HepG2 (cell line): ENCODE measurements at regions of chr6 and their contacts with region 1.

Region 1: DNA sequence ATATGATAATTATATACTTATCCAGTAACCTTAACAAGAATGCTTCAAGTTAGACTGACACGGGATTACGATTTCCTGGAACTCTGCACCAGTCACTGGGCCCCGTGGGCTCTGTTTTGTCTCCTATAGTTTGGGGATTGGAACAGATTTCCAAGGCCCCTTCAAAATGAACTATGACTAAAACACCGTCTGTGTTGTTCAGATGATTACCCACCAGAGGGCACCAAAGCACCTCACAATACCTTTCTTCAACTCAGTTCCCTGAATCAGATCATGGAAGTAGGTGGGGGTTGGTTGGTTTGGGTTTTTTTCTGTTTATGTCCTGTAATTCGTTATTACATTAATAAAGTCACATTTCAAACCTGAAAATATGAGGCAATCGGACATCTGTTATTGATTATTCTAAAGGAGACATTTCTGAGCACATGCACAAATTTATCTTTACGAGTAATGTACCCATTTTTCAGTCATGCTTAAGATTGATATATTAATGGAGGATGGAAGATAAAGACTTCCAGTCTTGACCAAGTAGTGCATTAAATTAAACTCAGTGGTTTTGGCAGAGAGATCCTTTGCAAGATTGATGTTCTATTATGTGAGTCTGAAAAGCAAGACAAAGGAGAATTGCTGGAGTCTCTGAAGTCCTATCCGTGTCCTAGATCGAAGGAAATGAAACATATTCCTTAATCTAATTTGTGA is 112.0 kb upstream of the COL21A1 start:
- DNase-seq: peak; percentile 74
- ATAC-seq: peak; percentile 93
- H3K4me3 ChIP-seq: no peak overlapping the region
- H3K27ac ChIP-seq: no peak overlapping the region
- H3K4me1 ChIP-seq: peaks cover 15% of the 10 kb centered on the region
- H3K27me3 ChIP-seq: peaks cover 0 to 4% of the 10 kb centered on the region in 2 experiments; a peak in 1 of 5 replicates
- CTCF ChIP-seq: peak; percentile 91
- EP300 ChIP-seq: no peak
- POLR2A ChIP-seq: no peak
- RAD21 ChIP-seq: peak; percentile 92

Region 2: GRCh38 chr6:56314683-56315523 is 44.4 kb before region 1 on chr6:
- CTCF ChIA-PET with region 1: no interaction called
- POLR2A ChIA-PET with region 1: no interaction called
- in situ Hi-C with region 1: no loop called
- intact Hi-C with region 1: loop called (anchors 1 kb)
- DNase-seq: peak; percentile 47
- ATAC-seq: peak; percentile 86
- H3K4me3 ChIP-seq: no peak overlapping the region
- H3K27ac ChIP-seq: no peak overlapping the region
- H3K4me1 ChIP-seq: no peaks in the 10 kb centered on the region
- H3K27me3 ChIP-seq: peaks cover 0 to 8% of the 10 kb centered on the region in 2 experiments; a peak in 1 of 5 replicates
- CTCF ChIP-seq: peak; percentile 80
- EP300 ChIP-seq: no peak
- POLR2A ChIP-seq: no peak
- RAD21 ChIP-seq: peak; percentile 64

Region 3: GRCh38 chr6:56549014-56549413 is 189.7 kb after region 1 on chr6:
- CTCF ChIA-PET with region 1: interaction called, 10 read pairs
- POLR2A ChIA-PET with region 1: no interaction called
- in situ Hi-C with region 1: no loop called
- intact Hi-C with region 1: loop called (anchors 1 kb)
- DNase-seq: no peak
- ATAC-seq: peak; percentile 58; the same call in 2 of the 3 replicates
- H3K4me3 ChIP-seq: no peak overlapping the region
- H3K27ac ChIP-seq: no peak overlapping the region
- H3K4me1 ChIP-seq: peaks cover 17% of the 10 kb centered on the region
- H3K27me3 ChIP-seq: no peaks in the 10 kb centered on the region
- CTCF ChIP-seq: peak; percentile 47
- EP300 ChIP-seq: no peak
- POLR2A ChIP-seq: no peak
- RAD21 ChIP-seq: no peak

Region 4: DNA sequence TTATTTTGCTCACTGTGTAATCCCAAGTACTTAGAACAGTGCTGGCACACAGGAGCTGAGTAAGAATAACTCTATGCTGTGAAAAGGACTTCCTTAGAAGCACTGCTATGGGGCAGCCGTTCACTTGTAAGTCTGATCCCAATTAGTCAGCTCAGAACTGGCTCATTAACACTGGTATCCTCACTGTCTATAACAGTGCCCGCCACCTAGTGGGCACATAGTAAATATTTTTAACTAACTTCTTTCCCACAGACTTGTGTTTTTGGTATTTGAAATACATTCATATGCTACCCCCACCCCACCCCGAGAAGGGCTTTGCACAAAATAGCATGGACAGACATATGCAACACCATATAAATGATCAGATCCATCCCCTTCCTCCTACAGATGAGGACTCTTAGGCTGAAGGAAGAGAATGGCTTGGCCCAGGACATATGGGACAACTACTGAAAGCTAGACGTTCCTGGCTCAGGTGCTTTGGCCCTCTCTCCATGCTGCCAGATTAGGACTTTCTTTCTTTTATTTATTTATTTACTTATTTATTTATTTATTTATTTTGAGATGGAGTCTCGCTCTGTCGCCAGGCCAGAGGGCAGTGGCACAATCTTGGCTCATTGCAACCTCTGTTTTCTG is 236.3 kb after region 1 on chr6:
- CTCF ChIA-PET with region 1: interaction called, 89 read pairs
- POLR2A ChIA-PET with region 1: no interaction called
- in situ Hi-C with region 1: loop called (anchors 5 kb)
- intact Hi-C with region 1: loop called (anchors 1 kb)
- DNase-seq: peak; percentile 43
- ATAC-seq: peak; percentile 89
- H3K4me3 ChIP-seq: no peak overlapping the region
- H3K27ac ChIP-seq: no peak overlapping the region
- H3K4me1 ChIP-seq: no peaks in the 10 kb centered on the region
- H3K27me3 ChIP-seq: no peaks in the 10 kb centered on the region
- CTCF ChIP-seq: peak; percentile 74
- EP300 ChIP-seq: no peak
- POLR2A ChIP-seq: no peak
- RAD21 ChIP-seq: no peak

Region 5: DNA sequence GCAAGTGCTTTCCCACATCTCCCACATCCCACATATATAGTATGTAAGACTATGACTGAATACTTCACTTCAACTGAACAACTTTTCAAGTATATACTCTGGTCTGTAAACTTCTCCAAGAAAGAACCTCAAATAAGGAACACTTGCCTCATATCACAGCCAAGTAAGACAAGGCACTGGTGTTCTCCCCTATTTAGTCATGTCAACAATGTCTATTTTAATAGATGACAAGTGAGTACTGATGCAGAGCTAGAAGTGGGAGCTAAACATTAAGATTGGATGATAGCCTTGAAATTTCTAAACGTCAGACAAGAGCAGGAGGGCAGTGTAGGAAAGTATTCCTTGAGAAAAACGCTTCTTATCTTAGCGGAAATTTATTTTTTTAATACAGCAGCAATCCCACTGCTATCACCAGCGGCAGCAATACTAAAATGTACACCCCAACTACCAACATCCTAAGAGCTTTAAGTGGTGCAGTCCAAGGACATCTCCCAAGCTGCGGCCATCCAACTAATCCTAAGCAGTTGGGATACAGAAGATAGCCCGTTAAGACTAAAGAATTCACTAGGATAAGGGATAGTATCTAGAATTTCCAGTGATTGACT is 254.0 kb after region 1 on chr6:
- CTCF ChIA-PET with region 1: no interaction called
- POLR2A ChIA-PET with region 1: no interaction called
- in situ Hi-C with region 1: no loop called
- intact Hi-C with region 1: no loop called
- DNase-seq: no peak
- ATAC-seq: no peak
- H3K4me3 ChIP-seq: no peak overlapping the region
- H3K27ac ChIP-seq: no peak overlapping the region
- H3K4me1 ChIP-seq: no peaks in the 10 kb centered on the region
- H3K27me3 ChIP-seq: no peaks in the 10 kb centered on the region
- CTCF ChIP-seq: no peak
- EP300 ChIP-seq: no peak
- POLR2A ChIP-seq: no peak
- RAD21 ChIP-seq: no peak

Region 6: GRCh38 chr6:56708810-56709597 is 349.7 kb after region 1 on chr6:
- CTCF ChIA-PET with region 1: no interaction called
- POLR2A ChIA-PET with region 1: no interaction called
- in situ Hi-C with region 1: loop called (anchors 10 kb)
- intact Hi-C with region 1: no loop called
- DNase-seq: peak; percentile 66
- ATAC-seq: peak; percentile 43; the same call in 2 of the 3 replicates
- H3K4me3 ChIP-seq: no peak overlapping the region
- H3K27ac ChIP-seq: no peak overlapping the region
- H3K4me1 ChIP-seq: peaks cover 23% of the 10 kb centered on the region
- H3K27me3 ChIP-seq: no peaks in the 10 kb centered on the region
- CTCF ChIP-seq: peak; percentile 62
- EP300 ChIP-seq: no peak
- POLR2A ChIP-seq: no peak
- RAD21 ChIP-seq: peak; percentile 68; the same call in 1 of the 2 replicates